Activated CD8-positive, alpha-beta T cell treated with anti-CD3 and anti-CD28 coated beads, Interleukin-2, amount 10 ng/mL, durations not matched to agents 7 days and 5 days (primary cell): ENCODE measurements at regions of chr9 and their contacts with region 1.

Region 1: DNA sequence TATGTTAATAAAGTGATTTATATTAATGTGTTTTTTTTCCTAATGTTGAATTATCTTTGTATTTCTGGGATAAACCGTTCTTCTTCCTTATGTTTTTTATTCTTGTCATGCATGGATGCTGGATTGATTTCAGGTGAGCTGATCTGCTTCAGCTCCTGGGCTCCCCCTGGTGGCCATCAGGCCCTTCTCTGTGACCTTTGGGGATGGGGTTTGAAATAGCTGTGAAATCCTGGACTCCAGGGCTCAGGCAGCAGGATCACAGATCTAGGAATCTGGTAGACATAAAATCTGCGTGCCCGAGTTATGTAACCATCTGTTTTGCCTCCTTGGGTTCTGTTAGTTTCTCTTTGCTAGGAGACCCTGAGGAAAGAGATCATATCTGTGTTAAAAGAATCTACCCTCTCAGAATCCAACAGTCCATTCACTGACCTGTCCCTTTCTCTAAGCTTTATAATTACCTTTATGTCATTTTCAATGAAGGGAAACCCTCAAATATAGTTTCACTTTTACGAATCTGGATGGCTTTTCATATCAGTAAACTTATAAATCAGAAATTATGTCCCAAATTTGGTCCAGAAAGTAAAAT is 12.2 kb upstream of the OR13J1 start:
- DNase-seq: peak; percentile 84
- ATAC-seq: peak; percentile 75
- H3K4me3 Mint-ChIP-seq: no peak overlapping the region
- H3K27ac Mint-ChIP-seq: no peak overlapping the region
- H3K4me1 Mint-ChIP-seq: no peaks in the 10 kb centered on the region
- H3K27me3 Mint-ChIP-seq: peaks cover 34% of the 10 kb centered on the region

Region 2: DNA sequence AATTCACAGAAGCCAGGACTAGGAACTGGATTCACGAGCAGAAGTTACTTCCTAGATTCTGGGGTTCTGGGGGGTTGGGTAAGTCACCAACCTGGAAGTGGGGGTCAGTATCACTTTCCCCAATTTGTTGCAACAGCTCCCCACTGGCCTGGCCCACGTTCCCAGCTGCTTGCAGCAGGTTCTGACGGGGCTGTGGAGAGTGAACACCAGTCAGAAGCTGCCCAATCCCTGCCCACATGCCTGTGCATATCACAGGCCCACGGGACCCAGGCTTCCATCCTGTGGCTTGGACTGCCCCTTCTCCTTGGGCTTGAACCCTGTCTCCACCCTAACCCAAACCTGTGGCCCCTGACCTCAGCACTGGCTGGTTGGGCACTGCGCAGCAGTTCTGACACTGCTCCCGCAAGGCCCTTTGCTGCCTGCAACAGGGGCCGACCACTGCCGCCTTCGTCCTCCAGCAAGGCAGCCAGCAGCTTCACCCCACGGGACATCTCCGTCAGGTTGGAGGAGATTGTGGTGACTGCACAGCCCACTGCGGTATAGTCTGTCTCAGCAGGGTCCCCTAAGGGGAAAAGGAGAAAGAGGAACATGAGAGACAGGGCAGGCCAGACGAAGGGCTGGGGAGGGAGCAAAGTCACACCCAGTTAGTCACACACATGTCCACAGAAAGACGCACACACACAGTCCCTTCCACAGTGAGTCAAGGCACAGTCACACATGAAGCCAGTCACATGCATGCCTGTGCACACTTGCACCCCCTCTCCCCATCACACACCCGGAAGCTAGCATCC is 163.4 kb before region 1 on chr9:
- CTCF ChIA-PET with region 1: no interaction called
- POLR2A ChIA-PET with region 1: no interaction called
- DNase-seq: no peak
- ATAC-seq: no peak
- H3K4me3 Mint-ChIP-seq: no peak overlapping the region
- H3K27ac Mint-ChIP-seq: no peak overlapping the region
- H3K4me1 Mint-ChIP-seq: peaks cover 3% of the 10 kb centered on the region
- H3K27me3 Mint-ChIP-seq: no peaks in the 10 kb centered on the region

Region 3: DNA sequence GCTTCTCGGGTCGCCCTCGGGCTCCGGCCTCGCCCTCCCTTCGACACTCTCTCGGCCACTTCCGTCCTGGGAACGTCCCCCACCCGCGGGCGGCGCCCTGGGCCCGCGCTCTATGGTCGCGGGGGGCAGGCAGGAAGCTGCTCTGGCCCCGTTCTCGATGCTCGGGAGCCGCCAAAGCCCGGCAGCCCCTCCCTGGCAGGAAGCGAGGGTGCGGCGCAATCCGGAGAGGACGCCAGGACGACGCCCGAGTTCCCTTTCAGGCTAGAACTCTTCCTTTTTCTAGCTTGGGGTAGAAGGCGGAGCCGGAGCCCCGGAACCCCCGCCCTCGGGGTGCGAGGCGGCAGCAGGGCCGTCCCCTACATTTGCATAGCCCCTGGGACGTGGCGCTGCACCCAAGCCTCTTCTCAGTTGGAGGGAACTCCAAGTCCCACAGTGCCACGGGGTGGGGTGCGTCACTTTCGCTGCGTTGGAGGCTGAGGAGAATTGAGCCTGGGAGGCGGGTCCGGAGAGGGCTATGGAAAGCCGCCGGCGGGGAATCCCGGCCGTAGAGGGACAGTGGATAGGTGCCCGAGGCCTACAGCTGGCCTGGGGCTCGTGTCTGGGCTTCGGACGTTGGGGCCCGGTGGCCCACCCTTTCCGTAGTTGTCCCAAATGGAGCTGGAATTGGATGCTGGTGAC is 150.1 kb before region 1 on chr9 and contains the starts of genes CREB3 and TLN1:
- CTCF ChIA-PET with region 1: interaction called, 14 read pairs
- POLR2A ChIA-PET with region 1: no interaction called
- DNase-seq: peak; percentile 99
- ATAC-seq: peak; percentile 93
- H3K4me3 Mint-ChIP-seq: no peak within 1 kb of the TSS
- H3K27ac Mint-ChIP-seq: peak within 1 kb of the TSS; percentile 89
- H3K4me1 Mint-ChIP-seq: peaks cover 23% of the 10 kb centered on the region
- H3K27me3 Mint-ChIP-seq: no peaks in the 10 kb centered on the region
- total RNA-seq, gene CREB3: 21.6 to 21.7 TPM
- total RNA-seq, gene TLN1: 448 to 450 TPM

Region 4: GRCh38 chr9:35790385-35791296 is 91.7 kb before region 1 on chr9:
- CTCF ChIA-PET with region 1: interaction called, 56 read pairs
- POLR2A ChIA-PET with region 1: no interaction called
- DNase-seq: peak; percentile 73
- ATAC-seq: peak; percentile 90
- H3K4me3 Mint-ChIP-seq: no peak overlapping the region
- H3K27ac Mint-ChIP-seq: no peak overlapping the region
- H3K4me1 Mint-ChIP-seq: peaks cover 17% of the 10 kb centered on the region
- H3K27me3 Mint-ChIP-seq: no peaks in the 10 kb centered on the region

Region 5: GRCh38 chr9:35814841-35815543 is 67.4 kb before region 1 on chr9 and contains the start of gene HINT2:
- CTCF ChIA-PET with region 1: interaction called, 16 read pairs
- POLR2A ChIA-PET with region 1: no interaction called
- DNase-seq: peak; percentile 100
- ATAC-seq: peak; percentile 82
- H3K4me3 Mint-ChIP-seq: peak within 1 kb of the TSS; percentile 91
- H3K27ac Mint-ChIP-seq: peak within 1 kb of the TSS; percentile 95
- H3K4me1 Mint-ChIP-seq: peaks cover 47% of the 10 kb centered on the region
- H3K27me3 Mint-ChIP-seq: peaks cover 14% of the 10 kb centered on the region
- total RNA-seq, gene HINT2: 74.7 to 76.8 TPM

Region 6: GRCh38 chr9:35844716-35845270 is 37.6 kb before region 1 on chr9:
- CTCF ChIA-PET with region 1: interaction called, 24 read pairs
- POLR2A ChIA-PET with region 1: no interaction called
- DNase-seq: peak; percentile 35
- ATAC-seq: peak; percentile 60
- H3K4me3 Mint-ChIP-seq: no peak overlapping the region
- H3K27ac Mint-ChIP-seq: no peak overlapping the region
- H3K4me1 Mint-ChIP-seq: peaks cover 37% of the 10 kb centered on the region
- H3K27me3 Mint-ChIP-seq: no peaks in the 10 kb centered on the region

Region 7: GRCh38 chr9:35864695-35865255 is 17.6 kb before region 1 on chr9:
- CTCF ChIA-PET with region 1: interaction called, 18 read pairs
- POLR2A ChIA-PET with region 1: no interaction called
- DNase-seq: peak; percentile 14
- ATAC-seq: no peak
- H3K4me3 Mint-ChIP-seq: no peak overlapping the region
- H3K27ac Mint-ChIP-seq: no peak overlapping the region
- H3K4me1 Mint-ChIP-seq: no peaks in the 10 kb centered on the region
- H3K27me3 Mint-ChIP-seq: peaks cover 18% of the 10 kb centered on the region

Region 8: GRCh38 chr9:35896570-35896969 is 14.2 kb after region 1 on chr9:
- CTCF ChIA-PET with region 1: interaction called, 32 read pairs
- POLR2A ChIA-PET with region 1: no interaction called
- DNase-seq: no peak
- ATAC-seq: no peak
- H3K4me3 Mint-ChIP-seq: no peak overlapping the region
- H3K27ac Mint-ChIP-seq: no peak overlapping the region
- H3K4me1 Mint-ChIP-seq: no peaks in the 10 kb centered on the region
- H3K27me3 Mint-ChIP-seq: peaks cover 40% of the 10 kb centered on the region

Region 9: DNA sequence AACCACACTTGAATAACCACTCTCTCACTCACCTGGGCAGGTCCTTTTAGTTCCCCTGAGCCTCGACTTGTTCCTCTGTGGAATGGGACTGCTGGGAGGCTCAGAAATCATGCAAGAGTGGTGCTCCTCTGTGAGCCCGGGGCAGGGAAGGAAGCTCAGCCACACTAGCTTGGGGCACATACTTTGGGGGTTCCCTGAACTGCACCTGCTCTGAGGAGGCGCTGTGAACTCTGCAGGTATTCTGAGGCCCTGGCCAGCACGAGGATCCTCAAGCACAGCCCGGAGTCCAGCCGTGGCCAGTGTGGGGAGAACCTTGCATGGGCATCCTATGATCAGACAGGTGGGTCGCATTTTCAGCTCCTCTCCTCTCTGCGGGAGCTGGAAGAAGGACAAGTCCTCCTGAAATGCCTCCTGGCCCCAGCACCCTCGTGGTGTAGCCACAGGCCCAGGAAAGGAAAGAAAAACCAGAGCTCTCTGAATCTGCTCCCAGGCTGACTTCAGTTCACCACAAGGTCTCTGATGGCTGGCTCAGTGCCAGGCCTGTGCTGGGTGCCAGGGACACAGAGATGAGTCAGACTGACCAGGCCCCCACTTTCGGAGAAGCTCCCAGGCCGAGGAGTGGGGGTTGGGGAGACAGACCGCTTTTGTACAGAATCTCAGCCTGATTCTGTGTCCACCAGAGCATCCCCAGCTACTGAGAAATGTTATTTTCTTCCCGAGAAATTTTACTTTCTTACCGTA is 266.1 kb after region 1 on chr9:
- CTCF ChIA-PET with region 1: no interaction called
- POLR2A ChIA-PET with region 1: no interaction called
- DNase-seq: peak; percentile 77
- ATAC-seq: peak; percentile 40
- H3K4me3 Mint-ChIP-seq: no peak overlapping the region
- H3K27ac Mint-ChIP-seq: peak overlapping the region; percentile 75
- H3K4me1 Mint-ChIP-seq: peaks cover 89% of the 10 kb centered on the region
- H3K27me3 Mint-ChIP-seq: no peaks in the 10 kb centered on the region